Psoas muscle (tissue), 8 donors: ENCODE measurements at regions of chr7 and their contacts with region 1.

Region 1: GRCh38 chr7:44240983-44241510 is 40.3 kb downstream of the YKT6 start:
- DNase-seq: peak; percentile 74 to 87
- ATAC-seq: peak; percentile 89 to 96 (median 92)
- H3K4me3 ChIP-seq: no peak overlapping the region
- H3K27ac ChIP-seq: no peak overlapping the region
- H3K4me1 ChIP-seq: peaks cover 7% of the 10 kb centered on the region
- H3K27me3 ChIP-seq: no peaks in the 10 kb centered on the region
- CTCF ChIP-seq: peak; percentile 67

Region 2: GRCh38 chr7:44284216-44284615 is 43.2 kb after region 1 on chr7:
- intact Hi-C with region 1: loop called in 1 of 2 experiments (anchors 2 kb)
- DNase-seq: peak; percentile 16 to 35
- ATAC-seq: no peak
- H3K4me3 ChIP-seq: no peak overlapping the region
- H3K27ac ChIP-seq: peak overlapping the region; percentile 95
- H3K4me1 ChIP-seq: peaks cover 55% of the 10 kb centered on the region
- H3K27me3 ChIP-seq: no peaks in the 10 kb centered on the region
- CTCF ChIP-seq: no peak

Region 3: DNA sequence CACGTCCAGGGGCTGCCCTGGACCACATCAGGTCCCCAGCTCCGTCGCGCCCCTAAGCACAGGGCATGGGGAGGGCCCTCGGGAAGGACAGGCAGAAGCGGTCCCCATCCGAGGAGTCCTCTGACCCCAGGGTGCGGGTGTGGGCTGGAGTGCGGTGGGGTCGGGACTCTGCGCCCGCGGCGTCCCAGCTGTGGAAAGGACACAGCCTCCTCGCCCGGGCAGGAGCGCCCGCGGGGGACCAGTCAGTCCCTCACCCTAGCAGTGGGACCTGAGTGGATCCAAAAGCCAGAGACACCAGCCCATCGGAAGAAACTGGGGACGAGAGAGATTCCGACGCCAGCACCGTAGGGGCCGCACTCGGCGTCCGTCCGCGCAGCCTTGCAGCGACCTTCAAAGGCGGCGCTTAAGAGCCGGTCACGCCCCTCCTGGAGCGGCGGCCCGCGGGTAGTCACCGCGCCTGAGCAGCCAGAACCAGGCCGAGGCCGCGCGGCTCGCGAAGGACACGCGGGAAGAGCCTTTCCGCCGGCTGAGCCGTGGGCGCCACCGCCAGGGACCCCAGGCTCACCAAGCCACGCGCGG is 68.5 kb after region 1 on chr7:
- intact Hi-C with region 1: loop called in 1 of 2 experiments (anchors 2 kb)
- DNase-seq: peak; percentile 79 to 86
- ATAC-seq: peak; percentile 74 to 84 (median 76)
- H3K4me3 ChIP-seq: peak overlapping the region; percentile 68
- H3K27ac ChIP-seq: peak overlapping the region; percentile 84
- H3K4me1 ChIP-seq: peaks cover 24% of the 10 kb centered on the region
- H3K27me3 ChIP-seq: no peaks in the 10 kb centered on the region
- CTCF ChIP-seq: no peak